ENCODE measurements at regions of chr2 and their contacts with region 1.

Region 1: DNA sequence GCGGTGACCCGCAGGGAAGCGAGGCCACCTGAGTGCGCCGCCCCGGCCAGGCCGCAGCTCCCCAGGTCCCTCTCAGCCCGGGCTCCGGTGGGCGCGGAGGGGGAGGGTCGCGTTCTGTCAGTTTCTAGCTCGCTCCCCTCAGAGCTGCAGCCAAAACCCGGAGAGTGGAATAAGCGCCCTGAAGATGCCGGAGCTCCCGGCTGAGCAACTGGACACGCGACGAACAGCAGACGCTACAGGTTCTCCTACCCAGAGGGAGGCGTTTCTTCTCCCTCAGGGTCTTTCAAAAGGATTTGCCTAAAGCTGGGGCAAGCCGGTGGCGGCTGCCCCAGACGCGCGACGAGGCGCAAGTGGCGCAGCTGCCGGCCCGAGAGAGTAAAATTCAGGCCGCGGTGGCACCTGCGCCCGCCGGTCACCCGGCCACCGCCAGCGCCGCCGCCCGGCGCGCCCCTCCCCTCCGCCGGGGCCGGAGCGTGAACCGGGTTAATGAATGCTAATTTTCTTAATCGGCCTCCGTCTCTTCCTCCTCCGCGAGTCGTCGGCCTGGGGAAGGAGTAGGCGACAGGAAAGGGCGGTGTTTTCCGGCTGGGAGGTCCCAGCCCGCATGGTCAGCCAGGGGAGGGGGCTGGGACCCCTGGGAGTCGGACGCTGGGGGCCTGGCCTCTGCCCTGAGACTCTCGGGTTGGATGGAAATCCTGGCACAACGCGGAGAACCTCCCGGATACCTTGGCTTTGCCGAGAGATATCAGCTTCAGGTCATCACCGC is 845 bp upstream of the CDC42EP3 start:
- DNase-seq: peak; percentile 78 to 89
- ATAC-seq: peak; percentile 77 to 88 (median 82)
- H3K4me3 ChIP-seq: peak overlapping the region; percentile 98
- H3K27ac ChIP-seq: peak overlapping the region; percentile 100
- H3K4me1 ChIP-seq: peaks cover 23% of the 10 kb centered on the region
- H3K27me3 ChIP-seq: no peaks in the 10 kb centered on the region
- CTCF ChIP-seq: no peak

Region 2: DNA sequence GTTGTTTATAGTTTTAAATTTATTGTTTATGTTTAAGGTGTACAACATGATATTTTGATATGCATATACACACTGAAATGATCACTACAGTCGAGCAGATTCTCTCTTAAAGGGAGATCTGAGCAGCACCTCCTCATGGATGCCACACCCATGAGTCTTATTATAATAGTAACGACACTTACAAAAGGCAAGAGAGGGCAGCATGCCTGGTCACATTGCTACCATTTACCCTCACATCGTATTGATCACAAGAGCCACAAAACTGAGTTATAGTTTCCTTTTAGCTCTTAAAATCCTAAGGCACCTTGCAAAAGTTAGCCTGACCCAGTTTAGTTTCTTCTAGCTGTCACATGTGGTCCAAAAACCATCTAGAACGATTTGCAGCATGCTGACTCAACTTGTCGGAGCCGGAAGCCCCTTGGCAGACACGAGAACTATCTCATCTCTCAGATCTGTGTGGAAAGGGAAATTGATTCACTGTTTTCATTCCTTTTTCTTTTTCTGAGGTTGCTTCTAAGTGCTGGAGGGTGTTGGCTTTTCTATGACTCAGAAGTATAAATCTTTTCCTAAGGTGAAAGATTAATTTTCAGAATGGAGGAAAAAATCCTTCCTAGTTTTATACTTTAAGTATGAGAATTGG is 86.2 kb before region 1 on chr2:
- intact Hi-C with region 1: loop called in 1 of 2 experiments (anchors 5 kb)
- DNase-seq: peak; percentile 52 to 68
- ATAC-seq: no peak
- H3K4me3 ChIP-seq: no peak overlapping the region
- H3K27ac ChIP-seq: peak overlapping the region; percentile 84
- H3K4me1 ChIP-seq: peaks cover 47% of the 10 kb centered on the region
- H3K27me3 ChIP-seq: no peaks in the 10 kb centered on the region
- CTCF ChIP-seq: no peak

Region 3: DNA sequence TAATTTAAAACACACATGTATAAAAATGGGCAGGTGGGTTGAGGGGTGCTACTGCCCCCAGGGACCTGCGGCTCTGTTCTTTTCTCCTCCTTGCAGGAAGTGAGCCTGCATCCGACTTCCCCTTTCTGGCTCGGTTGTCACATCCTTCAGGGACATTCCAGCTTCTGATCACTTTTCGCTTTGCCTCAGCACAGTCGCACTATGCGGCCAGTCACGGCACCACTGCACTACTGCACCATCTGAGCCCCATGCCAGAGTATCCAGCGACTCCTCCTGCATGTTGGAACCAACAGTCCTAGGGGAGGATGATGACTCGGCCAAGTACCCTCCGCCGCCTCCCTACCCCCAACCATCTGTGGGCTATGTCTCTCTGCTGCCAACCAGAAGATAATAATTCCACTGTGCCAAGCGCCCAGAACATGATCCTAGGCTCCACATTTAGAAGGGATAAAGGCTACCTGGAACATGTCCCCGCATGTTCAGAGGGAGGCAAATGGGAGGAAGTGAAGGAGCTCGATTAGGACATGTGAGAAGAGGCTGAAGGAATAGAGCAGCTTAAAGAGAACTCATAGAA is 18.4 kb before region 1 on chr2:
- intact Hi-C with region 1: loop called in 1 of 2 experiments (anchors 2 kb)
- DNase-seq: peak; percentile 73 to 92
- ATAC-seq: peak; percentile 80 to 93 (median 90)
- H3K4me3 ChIP-seq: peak overlapping the region; percentile 50
- H3K27ac ChIP-seq: peak overlapping the region; percentile 90
- H3K4me1 ChIP-seq: peaks cover 85% of the 10 kb centered on the region
- H3K27me3 ChIP-seq: no peaks in the 10 kb centered on the region
- CTCF ChIP-seq: no peak

Region 4: GRCh38 chr2:37766106-37766505 is 93.8 kb after region 1 on chr2:
- intact Hi-C with region 1: no loop called
- DNase-seq: no peak
- ATAC-seq: no peak
- H3K4me3 ChIP-seq: no peak overlapping the region
- H3K27ac ChIP-seq: no peak overlapping the region
- H3K4me1 ChIP-seq: peaks cover 12% of the 10 kb centered on the region
- H3K27me3 ChIP-seq: no peaks in the 10 kb centered on the region
- CTCF ChIP-seq: no peak

Region 5: DNA sequence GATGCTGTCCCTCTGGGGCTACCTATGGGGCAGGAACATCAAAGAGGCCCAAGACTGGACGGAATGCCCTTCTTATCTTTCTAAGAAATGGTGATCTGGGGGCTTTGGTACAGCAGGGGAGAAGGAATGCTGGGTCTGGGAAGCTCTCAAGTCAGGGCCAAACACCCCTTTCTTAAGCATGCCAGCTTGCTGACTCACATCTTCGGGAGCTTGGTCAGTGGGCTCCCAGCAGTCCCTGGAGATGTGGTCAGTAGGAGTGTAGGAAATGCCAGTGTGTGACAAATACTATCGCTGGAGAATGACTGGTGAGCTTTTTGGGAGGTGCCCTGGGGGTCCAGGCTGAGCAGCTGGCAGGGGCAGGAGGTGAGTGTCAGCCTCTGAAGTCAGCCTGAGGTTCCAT is 104.2 kb after region 1 on chr2:
- intact Hi-C with region 1: loop called in 1 of 2 experiments (anchors 5 kb)
- DNase-seq: no peak
- ATAC-seq: no peak
- H3K4me3 ChIP-seq: no peak overlapping the region
- H3K27ac ChIP-seq: peak overlapping the region; percentile 12
- H3K4me1 ChIP-seq: peaks cover 23% of the 10 kb centered on the region
- H3K27me3 ChIP-seq: no peaks in the 10 kb centered on the region
- CTCF ChIP-seq: no peak

Region 6: DNA sequence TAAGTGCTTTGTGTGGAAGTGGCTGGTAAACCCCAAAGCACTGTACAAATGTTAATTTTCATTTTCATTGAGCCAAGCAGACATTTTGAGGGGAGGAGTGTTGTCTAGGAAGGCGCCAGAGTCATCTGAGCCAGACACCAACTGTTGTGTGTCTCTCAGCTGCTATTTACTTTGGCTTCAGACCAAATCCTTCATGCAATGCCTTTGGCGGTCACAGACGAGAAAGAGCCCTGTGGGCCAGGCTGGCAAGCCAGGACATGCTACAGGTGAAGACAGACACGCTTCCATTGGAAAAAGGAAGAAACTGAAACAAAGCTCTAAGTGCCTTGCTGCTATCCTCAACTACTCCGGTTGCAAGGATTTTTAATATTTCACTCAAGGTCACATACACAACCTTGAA is 114.6 kb after region 1 on chr2:
- intact Hi-C with region 1: loop called in 1 of 2 experiments (anchors 2 kb)
- DNase-seq: peak; percentile 28 to 58
- ATAC-seq: peak; percentile 91 to 94 (median 92)
- H3K4me3 ChIP-seq: no peak overlapping the region
- H3K27ac ChIP-seq: peak overlapping the region; percentile 68
- H3K4me1 ChIP-seq: peaks cover 12% of the 10 kb centered on the region
- H3K27me3 ChIP-seq: no peaks in the 10 kb centered on the region
- CTCF ChIP-seq: no peak

Region 7: DNA sequence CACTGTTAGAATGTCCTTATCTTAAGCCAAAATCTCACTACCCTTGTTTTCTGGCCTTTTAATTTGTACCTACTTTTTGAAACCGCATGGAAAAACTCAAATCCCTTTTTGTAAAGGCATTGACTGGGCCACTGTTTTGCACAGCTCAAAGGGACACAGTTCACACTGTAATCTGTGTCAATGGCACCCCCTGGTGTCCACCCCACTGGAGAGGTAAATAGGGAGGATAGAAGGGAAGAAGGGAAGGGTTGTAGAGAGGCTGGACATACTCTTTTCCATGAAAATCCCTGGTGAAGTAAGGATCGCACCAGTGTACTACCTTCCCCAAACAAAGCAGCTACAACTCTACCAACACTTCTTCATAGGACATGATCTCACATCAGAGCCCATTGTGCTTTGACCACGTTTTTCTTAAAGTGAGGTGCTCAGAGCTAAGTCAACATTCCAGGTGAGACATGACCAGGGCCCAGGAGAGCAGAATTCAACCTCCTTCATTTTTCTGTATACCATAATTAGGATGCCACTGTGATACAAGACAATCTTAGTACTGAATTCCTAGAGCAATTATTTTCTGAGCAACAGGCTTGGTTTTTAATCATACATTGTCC is 160.4 kb after region 1 on chr2:
- intact Hi-C with region 1: loop called (anchors 2 to 5 kb)
- DNase-seq: peak; percentile 85 to 92
- ATAC-seq: peak; percentile 70 to 91 (median 74)
- H3K4me3 ChIP-seq: no peak overlapping the region
- H3K27ac ChIP-seq: no peak overlapping the region
- H3K4me1 ChIP-seq: peaks cover 23% of the 10 kb centered on the region
- H3K27me3 ChIP-seq: no peaks in the 10 kb centered on the region
- CTCF ChIP-seq: peak; percentile 85

Region 8: DNA sequence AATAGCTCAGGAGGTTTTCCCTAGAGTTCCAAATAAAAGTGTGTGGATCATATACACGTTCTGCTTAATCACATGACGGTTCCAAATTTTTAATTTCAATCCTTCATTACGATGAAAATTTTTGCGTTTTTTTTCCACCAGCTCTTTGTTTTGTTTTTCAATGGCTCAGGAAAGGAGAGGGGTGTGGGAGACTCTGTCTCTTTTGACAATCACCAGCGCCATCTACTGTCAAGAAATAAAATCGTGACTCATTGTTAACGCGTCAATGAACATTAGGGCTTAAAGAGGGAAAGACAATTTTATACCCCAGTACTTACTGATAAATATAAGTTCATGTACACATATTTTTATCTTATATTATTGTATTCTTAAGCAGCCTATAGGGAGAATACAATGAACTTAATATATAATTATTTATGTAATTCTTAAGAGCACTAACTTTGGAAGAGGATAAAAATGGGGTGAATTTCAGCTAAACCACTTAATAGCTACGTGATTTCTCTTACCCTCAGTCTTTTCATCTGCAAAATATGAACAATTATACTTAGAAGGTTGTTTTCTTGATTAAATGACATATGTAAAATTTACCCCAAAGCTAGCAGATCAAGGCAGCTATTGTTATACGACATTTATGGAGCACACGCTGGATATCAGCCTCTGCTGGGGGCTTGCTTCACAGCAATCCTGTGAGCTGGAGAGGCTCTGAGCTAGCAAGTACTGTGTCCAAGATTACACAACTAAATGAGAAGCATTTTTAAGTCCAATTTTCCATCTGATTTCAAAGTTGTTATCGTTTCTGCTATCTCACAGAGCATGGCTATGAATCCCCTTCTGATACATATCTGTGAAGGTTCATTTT is 205.4 kb after region 1 on chr2:
- intact Hi-C with region 1: loop called in 1 of 2 experiments (anchors 5 kb)
- DNase-seq: no peak
- ATAC-seq: peak; percentile 78 to 95 (median 82)
- H3K4me3 ChIP-seq: no peak overlapping the region
- H3K27ac ChIP-seq: no peak overlapping the region
- H3K4me1 ChIP-seq: peaks cover 5% of the 10 kb centered on the region
- H3K27me3 ChIP-seq: peaks cover 0 to 2% (median 0%) of the 10 kb centered on the region in 3 donors
- CTCF ChIP-seq: peak; percentile 81